ENCODE measurements at regions of chr3 and their contacts with region 1.

Region 1: GRCh38 chr3:194500198-194500597 is 13.4 kb upstream of the ATP13A3 start:
- DNase-seq: no peak
- H3K4me3 ChIP-seq: no peak overlapping the region
- H3K4me3 Mint-ChIP-seq: no peak overlapping the region
- H3K27ac Mint-ChIP-seq: no peak overlapping the region
- H3K4me1 ChIP-seq: peaks cover 17% of the 10 kb centered on the region
- H3K4me1 Mint-ChIP-seq: peaks cover 9% of the 10 kb centered on the region
- H3K27me3 ChIP-seq: no peaks in the 10 kb centered on the region
- H3K27me3 Mint-ChIP-seq: no peaks in the 10 kb centered on the region
- CTCF ChIP-seq: no peak

Region 2: GRCh38 chr3:194472290-194472920 is 27.8 kb before region 1 on chr3:
- CTCF ChIA-PET with region 1: interaction called, 3 read pairs
- POLR2A ChIA-PET with region 1: interaction called, 3 read pairs
- intact Hi-C with region 1: loop called (anchors 1 kb)
- DNase-seq: peak in 1 of 2 experiments; percentile 55
- H3K4me3 ChIP-seq: no peak overlapping the region
- H3K4me3 Mint-ChIP-seq: no peak overlapping the region
- H3K27ac Mint-ChIP-seq: no peak overlapping the region
- H3K4me1 ChIP-seq: peaks cover 7% of the 10 kb centered on the region
- H3K4me1 Mint-ChIP-seq: no peaks in the 10 kb centered on the region
- H3K27me3 ChIP-seq: no peaks in the 10 kb centered on the region
- H3K27me3 Mint-ChIP-seq: no peaks in the 10 kb centered on the region
- CTCF ChIP-seq: peak; percentile 86 to 97

Region 3: GRCh38 chr3:194607592-194608389 is 107.6 kb after region 1 on chr3:
- CTCF ChIA-PET with region 1: no interaction called
- POLR2A ChIA-PET with region 1: no interaction called
- intact Hi-C with region 1: no loop called
- DNase-seq: no peak
- H3K4me3 ChIP-seq: no peak overlapping the region
- H3K4me3 Mint-ChIP-seq: no peak overlapping the region
- H3K27ac Mint-ChIP-seq: no peak overlapping the region
- H3K4me1 ChIP-seq: no peaks in the 10 kb centered on the region
- H3K4me1 Mint-ChIP-seq: no peaks in the 10 kb centered on the region
- H3K27me3 ChIP-seq: no peaks in the 10 kb centered on the region
- H3K27me3 Mint-ChIP-seq: no peaks in the 10 kb centered on the region
- CTCF ChIP-seq: no peak

Region 4: DNA sequence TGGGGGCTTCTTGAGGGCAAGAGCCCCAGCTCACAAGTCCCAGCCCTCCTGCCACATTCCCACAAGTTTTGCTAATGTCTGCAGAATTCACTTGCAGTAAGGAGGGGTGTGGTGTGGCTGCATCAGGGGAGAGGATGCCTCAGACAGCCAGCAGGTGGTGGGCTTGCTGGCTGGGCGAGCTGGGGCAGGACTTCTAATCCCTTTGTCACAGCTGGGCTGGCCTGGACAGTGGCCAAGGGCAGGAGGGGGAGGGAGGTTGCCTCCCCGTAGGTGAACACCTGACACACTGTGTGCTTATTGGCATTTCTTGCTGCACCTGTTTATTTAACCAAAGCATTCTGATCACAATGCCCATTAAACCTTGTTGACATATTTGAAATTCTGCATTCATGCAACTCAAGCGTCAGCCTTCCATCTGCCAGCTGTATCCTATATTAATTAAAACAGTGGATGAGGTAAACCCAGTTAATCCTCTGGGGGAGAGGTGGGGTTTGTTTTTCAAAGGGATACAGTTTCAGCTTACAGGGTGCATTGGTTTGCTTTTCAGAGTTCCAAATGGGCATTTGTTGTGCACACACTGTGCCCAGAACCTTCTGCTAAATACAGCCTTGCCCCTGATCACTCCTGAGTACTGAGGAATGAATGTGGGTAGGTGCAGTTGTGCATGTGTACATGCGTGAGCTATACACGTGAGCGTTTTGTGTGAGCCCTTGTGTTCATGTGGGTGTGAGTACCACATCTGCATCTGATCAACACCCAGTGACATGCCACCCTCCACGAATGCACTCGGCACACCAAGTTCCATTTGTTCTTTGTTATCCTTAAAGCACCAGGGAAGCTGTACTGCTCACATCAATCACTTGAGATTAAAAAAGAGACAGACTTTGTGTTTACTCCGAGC is 502.0 kb after region 1 on chr3:
- CTCF ChIA-PET with region 1: no interaction called
- POLR2A ChIA-PET with region 1: no interaction called
- intact Hi-C with region 1: no loop called
- DNase-seq: peak; percentile 73 to 74
- H3K4me3 ChIP-seq: no peak overlapping the region
- H3K4me3 Mint-ChIP-seq: no peak overlapping the region
- H3K27ac Mint-ChIP-seq: no peak overlapping the region
- H3K4me1 ChIP-seq: peaks cover 6% of the 10 kb centered on the region; the same call in 1 of the 2 replicates
- H3K4me1 Mint-ChIP-seq: no peaks in the 10 kb centered on the region
- H3K27me3 ChIP-seq: no peaks in the 10 kb centered on the region
- H3K27me3 Mint-ChIP-seq: no peaks in the 10 kb centered on the region
- CTCF ChIP-seq: peak; percentile 41 to 85

Measured in Caco-2 (cell line).